ENCODE measurements at regions of chr5 and their contacts with region 1.

Region 1: GRCh38 chr5:170273945-170274710 is 23.4 kb downstream of the LCP2 start:
- DNase-seq: peak; percentile 63
- H3K4me3 ChIP-seq: no peak overlapping the region
- H3K27ac ChIP-seq: no peak overlapping the region
- H3K4me1 ChIP-seq: no peaks in the 10 kb centered on the region
- H3K27me3 ChIP-seq: no peaks in the 10 kb centered on the region
- CTCF ChIP-seq: peak; percentile 68

Region 2: GRCh38 chr5:170420780-170421412 is 146.8 kb after region 1 on chr5:
- CTCF ChIA-PET with region 1: interaction called, 5 read pairs
- POLR2A ChIA-PET with region 1: interaction called, 3 read pairs
- intact Hi-C with region 1: loop called (anchors 1 kb)
- DNase-seq: peak; percentile 66
- H3K4me3 ChIP-seq: no peak overlapping the region
- H3K27ac ChIP-seq: no peak overlapping the region
- H3K4me1 ChIP-seq: no peaks in the 10 kb centered on the region
- H3K27me3 ChIP-seq: no peaks in the 10 kb centered on the region
- CTCF ChIP-seq: peak; percentile 75

Measured in A673 (cell line).